Gastrocnemius medialis (tissue), 4 donors: ENCODE measurements at regions of chr3 and their contacts with region 1.

Region 1: DNA sequence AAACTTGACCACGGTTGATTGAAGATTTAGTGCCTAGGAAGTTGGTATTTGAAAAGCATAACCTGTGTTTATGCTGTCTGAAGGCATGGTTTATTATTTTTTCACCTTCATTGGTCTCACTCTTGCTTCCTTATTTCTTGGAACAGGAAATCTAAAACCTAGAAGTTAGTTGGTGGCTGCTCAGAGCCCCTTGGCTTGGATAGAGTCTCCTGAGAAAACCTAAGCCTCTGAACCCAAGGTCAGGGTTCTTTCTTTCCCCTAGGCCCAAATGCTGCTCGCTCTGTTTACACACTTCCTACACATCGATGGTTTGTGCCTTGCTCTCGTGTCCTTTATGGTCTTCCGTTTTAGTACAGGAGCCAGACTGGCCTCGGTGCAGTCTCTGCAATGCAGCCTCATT is 82.2 kb downstream of the TRAK1 start:
- DNase-seq: no peak
- ATAC-seq: no peak
- H3K4me3 ChIP-seq: no peak overlapping the region
- H3K27ac ChIP-seq: peak overlapping the region in 2 of 4 donors; percentile 60 to 61
- H3K4me1 ChIP-seq: peaks cover 74 to 77% of the 10 kb centered on the region in 2 donors
- H3K27me3 ChIP-seq: no peaks in the 10 kb centered on the region
- CTCF ChIP-seq: no peak
- POLR2A ChIP-seq: no peak

Region 2: GRCh38 chr3:42129014-42129953 is 44.0 kb before region 1 on chr3:
- in situ Hi-C with region 1: no loop called
- intact Hi-C with region 1: no loop called
- DNase-seq: no peak
- ATAC-seq: peak; percentile 49 to 60
- H3K4me3 ChIP-seq: no peak overlapping the region
- H3K27ac ChIP-seq: peak overlapping the region in 2 of 4 donors; percentile 4 to 39
- H3K4me1 ChIP-seq: peaks cover 18 to 29% of the 10 kb centered on the region in 2 donors
- H3K27me3 ChIP-seq: no peaks in the 10 kb centered on the region
- CTCF ChIP-seq: no peak
- POLR2A ChIP-seq: no peak

Region 3: GRCh38 chr3:42149532-42150426 is 23.5 kb before region 1 on chr3:
- in situ Hi-C with region 1: no loop called
- intact Hi-C with region 1: loop called (anchors 2 kb)
- DNase-seq: no peak
- ATAC-seq: no peak
- H3K4me3 ChIP-seq: peak overlapping the region in 2 of 4 donors; percentile 19 to 31
- H3K27ac ChIP-seq: peak overlapping the region in 2 of 4 donors; percentile 18 to 73
- H3K4me1 ChIP-seq: peaks cover 46 to 53% of the 10 kb centered on the region in 2 donors
- H3K27me3 ChIP-seq: no peaks in the 10 kb centered on the region
- CTCF ChIP-seq: no peak
- POLR2A ChIP-seq: no peak

Region 4: GRCh38 chr3:42214565-42215283 is 41.4 kb after region 1 on chr3:
- in situ Hi-C with region 1: no loop called
- intact Hi-C with region 1: no loop called
- DNase-seq: no peak
- ATAC-seq: no peak
- H3K4me3 ChIP-seq: no peak overlapping the region
- H3K27ac ChIP-seq: peak overlapping the region in 2 of 4 donors; percentile 11 to 76
- H3K4me1 ChIP-seq: peaks cover 5 to 31% of the 10 kb centered on the region in 2 donors
- H3K27me3 ChIP-seq: no peaks in the 10 kb centered on the region
- CTCF ChIP-seq: no peak
- POLR2A ChIP-seq: no peak

Region 5: GRCh38 chr3:43353923-43354670 is 1180.8 kb after region 1 on chr3:
- in situ Hi-C with region 1: no loop called
- intact Hi-C with region 1: no loop called
- DNase-seq: no peak
- ATAC-seq: no peak
- H3K4me3 ChIP-seq: no peak overlapping the region
- H3K27ac ChIP-seq: no peak overlapping the region
- H3K4me1 ChIP-seq: no peaks in the 10 kb centered on the region
- H3K27me3 ChIP-seq: no peaks in the 10 kb centered on the region
- CTCF ChIP-seq: no peak
- POLR2A ChIP-seq: no peak